Kidney (tissue), 22 donors: ENCODE measurements at regions of chr1 and their contacts with region 1.

Region 1: GRCh38 chr1:171583581-171584201 is 38.4 kb upstream of the MYOCOS start:
- DNase-seq: no peak
- H3K4me3 ChIP-seq: no peak overlapping the region
- H3K27ac ChIP-seq: no peak overlapping the region
- H3K4me1 ChIP-seq: no peaks in the 10 kb centered on the region
- H3K27me3 ChIP-seq: no peaks in the 10 kb centered on the region
- CTCF ChIP-seq: no peak

Region 2: GRCh38 chr1:171515299-171515698 is 68.4 kb before region 1 on chr1:
- intact Hi-C with region 1: loop called (anchors 10 kb)
- DNase-seq: no peak
- H3K4me3 ChIP-seq: no peak overlapping the region
- H3K27ac ChIP-seq: no peak overlapping the region
- H3K4me1 ChIP-seq: no peaks in the 10 kb centered on the region
- H3K27me3 ChIP-seq: no peaks in the 10 kb centered on the region
- CTCF ChIP-seq: no peak